Activated B cell treated with CpG ODN at 0.5 μM for 24 hours (primary cell): ENCODE measurements at regions of chr4 and their contacts with region 1.

Region 1: GRCh38 chr4:139560406-139561104 is 4.5 kb upstream of the SETD7 start:
- DNase-seq: peak; percentile 18
- ATAC-seq: peak; percentile 50
- H3K4me3 Mint-ChIP-seq: peak overlapping the region; percentile 81
- H3K27ac Mint-ChIP-seq: peak overlapping the region; percentile 97
- H3K4me1 Mint-ChIP-seq: peaks cover 32% of the 10 kb centered on the region
- H3K27me3 Mint-ChIP-seq: no peaks in the 10 kb centered on the region
- CTCF ChIP-seq: no peak

Region 2: GRCh38 chr4:139054791-139055376 is 505.7 kb before region 1 on chr4:
- CTCF ChIA-PET with region 1: no interaction called
- POLR2A ChIA-PET with region 1: no interaction called
- intact Hi-C with region 1: no loop called
- DNase-seq: no peak
- ATAC-seq: no peak
- H3K4me3 Mint-ChIP-seq: no peak overlapping the region
- H3K27ac Mint-ChIP-seq: peak overlapping the region; percentile 5
- H3K4me1 Mint-ChIP-seq: peaks cover 4% of the 10 kb centered on the region
- H3K27me3 Mint-ChIP-seq: no peaks in the 10 kb centered on the region
- CTCF ChIP-seq: no peak

Region 3: GRCh38 chr4:139509727-139510410 is 50.7 kb before region 1 on chr4:
- CTCF ChIA-PET with region 1: no interaction called
- POLR2A ChIA-PET with region 1: no interaction called
- intact Hi-C with region 1: no loop called
- DNase-seq: no peak
- ATAC-seq: no peak
- H3K4me3 Mint-ChIP-seq: no peak overlapping the region
- H3K27ac Mint-ChIP-seq: no peak overlapping the region
- H3K4me1 Mint-ChIP-seq: no peaks in the 10 kb centered on the region
- H3K27me3 Mint-ChIP-seq: no peaks in the 10 kb centered on the region
- CTCF ChIP-seq: no peak

Region 4: DNA sequence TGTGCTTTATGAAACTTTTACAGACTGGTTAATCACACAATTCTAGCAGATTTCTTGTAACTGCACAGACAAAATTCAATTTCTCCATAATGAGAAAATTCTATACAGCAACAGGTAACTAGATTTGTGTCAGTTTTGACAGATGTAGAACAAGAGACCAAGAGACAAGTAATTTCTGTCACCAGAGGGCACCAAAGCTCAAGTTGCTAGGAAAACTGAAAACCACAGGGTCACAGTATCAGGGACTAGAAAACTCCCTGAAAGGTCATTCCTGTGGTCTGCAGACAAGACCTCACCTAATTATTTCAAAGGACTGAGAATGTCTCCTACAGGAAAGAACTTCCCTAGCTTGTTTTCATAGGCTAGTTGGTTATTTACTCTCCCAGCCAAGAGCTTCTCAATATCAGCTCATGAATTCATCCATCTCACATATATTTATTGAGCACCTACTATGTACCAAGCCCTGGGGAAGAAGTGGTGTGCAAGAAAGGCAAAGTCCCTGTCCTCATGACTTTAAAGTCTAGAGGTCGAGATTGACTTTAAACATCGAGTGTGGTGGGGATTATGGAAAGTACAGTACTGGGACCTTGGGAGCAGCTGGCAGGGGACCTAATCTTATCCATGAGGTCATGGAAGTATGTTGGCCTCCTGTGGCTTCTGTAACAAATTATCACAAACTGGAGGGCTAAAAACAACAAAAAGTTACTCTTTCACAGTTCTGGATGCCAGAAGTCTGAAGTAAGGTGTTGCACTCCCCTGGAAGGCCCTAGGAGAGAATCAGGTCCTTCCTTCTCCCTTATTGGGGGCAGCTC is 43.2 kb after region 1 on chr4:
- CTCF ChIA-PET with region 1: interaction called, 3 read pairs
- POLR2A ChIA-PET with region 1: interaction called, 3 read pairs
- intact Hi-C with region 1: loop called (anchors 2 kb)
- DNase-seq: no peak
- ATAC-seq: peak; percentile 45
- H3K4me3 Mint-ChIP-seq: no peak overlapping the region
- H3K27ac Mint-ChIP-seq: no peak overlapping the region
- H3K4me1 Mint-ChIP-seq: peaks cover 9% of the 10 kb centered on the region
- H3K27me3 Mint-ChIP-seq: peaks cover 5% of the 10 kb centered on the region
- CTCF ChIP-seq: no peak